CD8-positive, alpha-beta memory T cell (primary cell): ENCODE measurements at regions of chr6 and their contacts with region 1.

Region 1: GRCh38 chr6:26122793-26123674 is 35.8 kb downstream of the HFE start:
- DNase-seq: peak; percentile 79 to 97 (median 95)
- H3K4me3 ChIP-seq: peak overlapping the region; percentile 90
- H3K4me3 Mint-ChIP-seq: peak overlapping the region; percentile 92 to 100 (median 97)
- H3K27ac ChIP-seq: peak overlapping the region; percentile 97
- H3K27ac Mint-ChIP-seq: peak overlapping the region; percentile 95 to 99 (median 98)
- H3K4me1 ChIP-seq: peaks cover 26% of the 10 kb centered on the region
- H3K4me1 Mint-ChIP-seq: peaks cover 30 to 40% (median 38%) of the 10 kb centered on the region in 3 donors
- H3K27me3 ChIP-seq: no peaks in the 10 kb centered on the region
- H3K27me3 Mint-ChIP-seq: peaks cover 0 to 10% of the 10 kb centered on the region in 2 donors

Region 2: GRCh38 chr6:25981568-25982263 is 141.3 kb before region 1 on chr6:
- CTCF ChIA-PET with region 1: no interaction called
- POLR2A ChIA-PET with region 1: no interaction called
- DNase-seq: no peak
- H3K4me3 ChIP-seq: no peak overlapping the region
- H3K4me3 Mint-ChIP-seq: no peak overlapping the region
- H3K27ac ChIP-seq: no peak overlapping the region
- H3K27ac Mint-ChIP-seq: peak overlapping the region in 5 of 8 donors; percentile 15 to 83 (median 53)
- H3K4me1 ChIP-seq: no peaks in the 10 kb centered on the region
- H3K4me1 Mint-ChIP-seq: peaks cover 10 to 30% (median 20%) of the 10 kb centered on the region in 3 donors
- H3K27me3 ChIP-seq: no peaks in the 10 kb centered on the region
- H3K27me3 Mint-ChIP-seq: no peaks in the 10 kb centered on the region

Region 3: GRCh38 chr6:26054857-26055669 is 68.0 kb before region 1 on chr6:
- CTCF ChIA-PET with region 1: no interaction called
- POLR2A ChIA-PET with region 1: interaction called, 60 read pairs
- DNase-seq: peak; percentile 74 to 89 (median 86)
- H3K4me3 ChIP-seq: peak overlapping the region; percentile 92
- H3K4me3 Mint-ChIP-seq: peak overlapping the region; percentile 90 to 97 (median 94)
- H3K27ac ChIP-seq: peak overlapping the region; percentile 96
- H3K27ac Mint-ChIP-seq: peak overlapping the region; percentile 90 to 99 (median 97)
- H3K4me1 ChIP-seq: peaks cover 9% of the 10 kb centered on the region
- H3K4me1 Mint-ChIP-seq: peaks cover 17 to 30% (median 26%) of the 10 kb centered on the region in 3 donors
- H3K27me3 ChIP-seq: no peaks in the 10 kb centered on the region
- H3K27me3 Mint-ChIP-seq: peaks cover 0 to 4% of the 10 kb centered on the region in 2 donors

Region 4: DNA sequence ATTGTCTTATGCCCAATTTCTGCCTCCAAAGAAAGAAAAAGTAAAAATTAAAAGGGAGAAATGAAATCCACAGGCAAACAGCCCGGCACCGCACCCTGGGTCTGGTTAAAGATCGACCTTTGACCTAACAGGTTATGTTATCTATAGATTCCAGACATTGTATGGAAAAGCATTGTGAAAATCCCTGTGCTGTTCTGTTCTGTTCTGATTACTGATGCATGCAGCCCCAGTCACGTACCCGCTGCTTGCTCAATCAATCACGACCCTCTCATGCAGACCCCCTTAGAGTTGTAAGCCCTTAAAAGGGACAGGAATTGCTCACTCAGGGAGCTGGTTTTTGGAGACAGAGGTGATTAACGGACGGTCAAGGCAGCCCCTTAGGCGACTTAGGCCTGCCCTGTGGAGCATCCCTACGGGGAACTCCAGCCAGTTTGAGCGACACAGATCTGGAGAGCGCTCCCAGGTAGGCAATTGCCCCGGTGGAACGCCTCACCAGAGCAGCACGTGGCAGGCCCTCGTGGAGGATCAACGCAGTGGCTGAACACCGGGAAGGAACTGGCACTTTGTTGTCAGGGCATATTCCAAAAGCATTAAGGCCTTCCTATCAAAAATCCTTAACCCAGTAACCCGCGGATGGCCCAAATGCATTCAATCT is 47.8 kb before region 1 on chr6:
- CTCF ChIA-PET with region 1: no interaction called
- POLR2A ChIA-PET with region 1: no interaction called
- DNase-seq: no peak
- H3K4me3 ChIP-seq: no peak overlapping the region
- H3K4me3 Mint-ChIP-seq: no peak overlapping the region
- H3K27ac ChIP-seq: no peak overlapping the region
- H3K27ac Mint-ChIP-seq: no peak overlapping the region
- H3K4me1 ChIP-seq: no peaks in the 10 kb centered on the region
- H3K4me1 Mint-ChIP-seq: no peaks in the 10 kb centered on the region
- H3K27me3 ChIP-seq: no peaks in the 10 kb centered on the region
- H3K27me3 Mint-ChIP-seq: peaks cover 4 to 6% of the 10 kb centered on the region in 2 donors

Region 5: DNA sequence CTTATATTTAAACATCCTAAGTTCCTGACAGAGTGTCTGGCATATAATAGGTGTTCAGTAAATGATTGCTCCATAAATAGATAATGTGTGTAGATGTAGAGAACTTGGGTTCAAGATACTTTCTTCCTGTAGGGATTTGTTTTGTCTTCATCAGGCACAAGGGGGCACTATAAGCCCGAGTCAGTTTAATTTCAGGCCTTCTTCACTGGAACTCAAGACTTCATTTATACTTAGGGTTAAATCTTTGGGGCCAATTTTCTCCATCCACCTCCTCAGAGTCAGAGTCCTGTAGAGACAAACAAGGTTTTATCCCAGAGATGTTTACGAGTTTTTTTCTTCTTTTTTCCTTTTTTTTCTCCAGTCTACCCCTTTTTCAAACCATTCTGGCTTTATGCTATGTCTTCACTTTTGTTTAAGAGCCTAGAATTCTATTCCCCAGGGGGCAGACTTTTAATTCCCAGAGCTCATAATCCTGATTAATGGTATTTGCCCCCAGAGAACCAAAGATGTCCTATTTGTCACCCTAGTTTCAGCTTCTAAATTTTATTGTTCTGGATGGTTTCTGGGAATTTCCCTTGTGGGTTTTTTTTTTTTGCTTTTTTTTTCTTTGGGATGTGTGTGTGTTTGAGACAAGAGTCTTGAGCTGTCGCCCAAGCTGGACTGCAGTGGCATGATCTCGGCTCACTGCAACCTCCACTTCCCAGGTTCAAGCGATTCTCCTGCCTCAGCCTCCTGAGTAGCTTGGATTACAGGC is 52.6 kb after region 1 on chr6:
- CTCF ChIA-PET with region 1: interaction called, 23 read pairs
- POLR2A ChIA-PET with region 1: interaction called, 106 read pairs
- DNase-seq: peak; percentile 8 to 63 (median 52)
- H3K4me3 ChIP-seq: no peak overlapping the region
- H3K4me3 Mint-ChIP-seq: peak overlapping the region in 2 of 7 donors; percentile 21 to 75
- H3K27ac ChIP-seq: no peak overlapping the region
- H3K27ac Mint-ChIP-seq: peak overlapping the region; percentile 8 to 89 (median 78)
- H3K4me1 ChIP-seq: peaks cover 36% of the 10 kb centered on the region
- H3K4me1 Mint-ChIP-seq: peaks cover 30 to 44% (median 40%) of the 10 kb centered on the region in 3 donors
- H3K27me3 ChIP-seq: no peaks in the 10 kb centered on the region
- H3K27me3 Mint-ChIP-seq: peaks cover 0 to 3% of the 10 kb centered on the region in 2 donors

Region 6: GRCh38 chr6:26216356-26216885 is 93.4 kb after region 1 on chr6:
- CTCF ChIA-PET with region 1: interaction called, 21 read pairs
- POLR2A ChIA-PET with region 1: interaction called, 104 read pairs
- DNase-seq: peak; percentile 43 to 93 (median 91)
- H3K4me3 ChIP-seq: peak overlapping the region; percentile 91
- H3K4me3 Mint-ChIP-seq: no peak overlapping the region
- H3K27ac ChIP-seq: peak overlapping the region; percentile 94
- H3K27ac Mint-ChIP-seq: no peak overlapping the region
- H3K4me1 ChIP-seq: peaks cover 23% of the 10 kb centered on the region
- H3K4me1 Mint-ChIP-seq: peaks cover 2 to 8% (median 5%) of the 10 kb centered on the region in 3 donors
- H3K27me3 ChIP-seq: no peaks in the 10 kb centered on the region
- H3K27me3 Mint-ChIP-seq: no peaks in the 10 kb centered on the region

Region 7: DNA sequence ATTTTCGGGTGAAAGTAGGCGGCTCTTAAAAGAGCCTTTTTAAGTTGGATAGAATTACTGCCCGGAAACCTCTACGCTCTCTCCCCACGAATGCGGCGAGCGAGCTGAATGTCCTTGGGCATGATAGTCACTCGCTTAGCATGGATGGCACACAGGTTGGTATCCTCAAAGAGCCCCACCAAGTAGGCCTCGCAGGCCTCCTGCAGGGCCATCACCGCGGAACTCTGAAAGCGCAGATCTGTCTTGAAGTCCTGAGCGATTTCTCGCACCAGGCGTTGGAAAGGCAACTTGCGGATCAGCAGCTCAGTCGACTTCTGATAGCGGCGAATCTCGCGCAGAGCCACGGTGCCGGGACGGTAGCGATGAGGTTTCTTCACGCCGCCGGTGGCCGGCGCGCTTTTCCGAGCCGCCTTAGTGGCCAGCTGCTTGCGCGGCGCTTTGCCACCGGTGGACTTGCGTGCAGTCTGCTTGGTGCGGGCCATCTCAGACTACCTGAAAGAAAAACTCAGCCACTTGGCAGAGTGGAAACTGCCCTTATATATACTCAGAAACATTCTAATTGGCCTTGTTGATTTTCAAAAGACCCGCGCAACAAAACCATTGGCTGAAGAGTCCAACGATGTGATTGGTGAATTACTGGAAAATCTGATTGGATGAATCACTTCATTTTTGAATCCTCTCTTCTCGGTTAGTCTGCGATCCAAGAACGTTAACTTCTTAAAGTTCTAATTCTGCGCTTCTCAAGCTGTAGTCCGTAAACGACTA is 148.1 kb after region 1 on chr6:
- CTCF ChIA-PET with region 1: interaction called, 9 read pairs
- POLR2A ChIA-PET with region 1: interaction called, 69 read pairs
- DNase-seq: peak; percentile 61 to 84 (median 82)
- H3K4me3 ChIP-seq: peak overlapping the region; percentile 70
- H3K4me3 Mint-ChIP-seq: no peak overlapping the region
- H3K27ac ChIP-seq: peak overlapping the region; percentile 40
- H3K27ac Mint-ChIP-seq: peak overlapping the region in 5 of 8 donors; percentile 16 to 98 (median 41)
- H3K4me1 ChIP-seq: peaks cover 23% of the 10 kb centered on the region
- H3K4me1 Mint-ChIP-seq: peaks cover 19 to 29% (median 22%) of the 10 kb centered on the region in 3 donors
- H3K27me3 ChIP-seq: no peaks in the 10 kb centered on the region
- H3K27me3 Mint-ChIP-seq: peaks cover 0 to 10% of the 10 kb centered on the region in 2 donors

Region 8: DNA sequence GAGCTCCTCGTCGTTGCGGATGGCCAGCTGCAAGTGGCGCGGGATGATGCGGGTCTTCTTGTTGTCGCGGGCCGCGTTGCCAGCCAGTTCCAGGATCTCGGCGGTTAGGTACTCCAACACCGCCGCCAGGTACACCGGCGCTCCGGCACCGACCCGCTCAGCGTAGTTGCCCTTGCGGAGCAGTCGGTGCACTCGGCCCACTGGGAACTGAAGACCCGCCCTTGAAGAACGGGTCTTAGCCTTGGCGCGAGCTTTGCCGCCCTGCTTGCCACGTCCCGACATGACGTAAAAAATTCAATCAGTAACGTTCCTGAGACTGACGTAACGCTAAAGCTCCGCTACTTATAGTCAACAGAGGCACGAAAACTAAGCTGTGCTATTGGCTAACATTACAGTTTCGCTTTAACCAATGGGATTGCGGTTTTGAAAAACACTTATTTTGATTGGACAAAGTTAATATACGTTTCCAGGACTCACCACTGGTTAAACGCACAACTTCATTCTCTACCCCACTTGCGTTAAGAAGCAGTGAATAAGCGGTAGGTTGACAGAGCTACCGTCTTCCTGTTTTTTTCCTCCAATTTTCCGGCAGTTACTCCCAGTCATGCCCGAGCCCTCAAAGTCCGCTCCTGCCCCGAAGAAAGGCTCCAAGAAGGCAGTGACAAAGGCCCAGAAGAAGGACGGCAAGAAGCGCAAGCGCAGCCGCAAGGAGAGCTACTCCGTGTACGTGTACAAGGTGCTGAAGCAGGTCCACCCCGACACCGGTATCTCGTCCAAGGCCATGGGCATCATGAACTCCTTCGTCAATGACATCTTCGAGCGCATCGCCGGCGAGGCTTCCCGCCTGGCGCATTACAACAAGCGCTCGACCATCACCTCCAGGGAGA is 1715.3 kb after region 1 on chr6:
- CTCF ChIA-PET with region 1: no interaction called
- POLR2A ChIA-PET with region 1: interaction called, 26 read pairs
- DNase-seq: peak; percentile 67 to 93 (median 92)
- H3K4me3 ChIP-seq: peak overlapping the region; percentile 71
- H3K4me3 Mint-ChIP-seq: no peak overlapping the region
- H3K27ac ChIP-seq: peak overlapping the region; percentile 99
- H3K27ac Mint-ChIP-seq: no peak overlapping the region
- H3K4me1 ChIP-seq: peaks cover 30% of the 10 kb centered on the region
- H3K4me1 Mint-ChIP-seq: peaks cover 12 to 23% (median 19%) of the 10 kb centered on the region in 3 donors
- H3K27me3 ChIP-seq: no peaks in the 10 kb centered on the region
- H3K27me3 Mint-ChIP-seq: peaks cover 5 to 13% of the 10 kb centered on the region in 2 donors